ENCODE measurements at regions of chr5 and their contacts with region 1.

Region 1: GRCh38 chr5:130279386-130279785 is 375.1 kb downstream of the CHSY3 start:
- DNase-seq: no peak
- ATAC-seq: no peak
- H3K4me3 ChIP-seq: no peak overlapping the region
- H3K27ac ChIP-seq: no peak overlapping the region
- H3K4me1 ChIP-seq: no peaks in the 10 kb centered on the region
- H3K27me3 ChIP-seq: no peaks in the 10 kb centered on the region
- CTCF ChIP-seq: no peak
- POLR2A ChIP-seq: no peak
- RAD21 ChIP-seq: no peak

Region 2: DNA sequence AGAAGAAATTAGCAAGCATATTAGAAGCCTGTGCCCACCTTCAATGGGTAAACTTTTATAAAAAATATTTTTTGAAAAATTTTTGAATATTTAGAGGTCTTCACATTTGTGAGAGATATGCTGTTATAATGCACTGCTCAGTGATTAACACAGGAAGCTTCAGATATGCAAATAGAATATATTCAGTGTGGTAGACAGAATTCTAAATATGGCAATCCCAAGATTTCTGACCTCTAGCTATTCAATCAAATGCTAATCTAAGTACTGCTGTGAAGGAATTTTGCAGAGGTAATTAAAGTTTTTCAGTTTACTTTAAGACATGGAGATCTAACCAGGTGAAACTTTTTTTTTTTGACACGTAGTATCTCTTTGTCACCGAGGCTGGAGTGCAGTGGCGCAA is 715.8 kb before region 1 on chr5:
- CTCF ChIA-PET with region 1: no interaction called
- POLR2A ChIA-PET with region 1: no interaction called
- dilution Hi-C with region 1: no loop called
- in situ Hi-C with region 1: no loop called
- intact Hi-C with region 1: no loop called
- DNase-seq: no peak
- ATAC-seq: no peak
- H3K4me3 ChIP-seq: no peak overlapping the region
- H3K27ac ChIP-seq: no peak overlapping the region
- H3K4me1 ChIP-seq: no peaks in the 10 kb centered on the region
- H3K27me3 ChIP-seq: no peaks in the 10 kb centered on the region
- CTCF ChIP-seq: no peak
- POLR2A ChIP-seq: no peak
- RAD21 ChIP-seq: no peak

Region 3: DNA sequence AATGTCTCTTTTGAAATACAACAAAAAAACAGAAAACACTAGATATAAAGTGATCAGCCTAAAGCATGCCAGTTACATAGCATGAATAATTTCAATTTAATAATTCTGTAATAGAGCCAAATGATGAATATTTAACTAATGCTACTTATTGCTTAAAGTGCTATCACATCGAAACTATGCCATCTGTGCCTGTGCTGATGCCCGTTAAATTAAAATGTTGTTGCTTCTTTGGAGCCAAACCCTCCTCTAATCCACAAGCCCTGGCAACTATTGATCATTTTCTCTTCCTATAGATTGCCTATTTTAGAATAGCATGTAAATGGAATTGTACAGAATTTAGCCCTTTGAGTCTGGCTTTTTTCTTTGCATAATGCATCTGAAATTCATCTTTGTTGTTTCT is 18.9 kb before region 1 on chr5:
- CTCF ChIA-PET with region 1: no interaction called
- POLR2A ChIA-PET with region 1: no interaction called
- dilution Hi-C with region 1: no loop called
- in situ Hi-C with region 1: no loop called
- intact Hi-C with region 1: loop called (anchors 1 kb)
- DNase-seq: no peak
- ATAC-seq: no peak
- H3K4me3 ChIP-seq: no peak overlapping the region
- H3K27ac ChIP-seq: no peak overlapping the region
- H3K4me1 ChIP-seq: no peaks in the 10 kb centered on the region
- H3K27me3 ChIP-seq: no peaks in the 10 kb centered on the region
- CTCF ChIP-seq: no peak
- POLR2A ChIP-seq: no peak
- RAD21 ChIP-seq: no peak

Measured in IMR-90 (cell line).